ENCODE measurements at regions of chr10 and their contacts with region 1.

Region 1: DNA sequence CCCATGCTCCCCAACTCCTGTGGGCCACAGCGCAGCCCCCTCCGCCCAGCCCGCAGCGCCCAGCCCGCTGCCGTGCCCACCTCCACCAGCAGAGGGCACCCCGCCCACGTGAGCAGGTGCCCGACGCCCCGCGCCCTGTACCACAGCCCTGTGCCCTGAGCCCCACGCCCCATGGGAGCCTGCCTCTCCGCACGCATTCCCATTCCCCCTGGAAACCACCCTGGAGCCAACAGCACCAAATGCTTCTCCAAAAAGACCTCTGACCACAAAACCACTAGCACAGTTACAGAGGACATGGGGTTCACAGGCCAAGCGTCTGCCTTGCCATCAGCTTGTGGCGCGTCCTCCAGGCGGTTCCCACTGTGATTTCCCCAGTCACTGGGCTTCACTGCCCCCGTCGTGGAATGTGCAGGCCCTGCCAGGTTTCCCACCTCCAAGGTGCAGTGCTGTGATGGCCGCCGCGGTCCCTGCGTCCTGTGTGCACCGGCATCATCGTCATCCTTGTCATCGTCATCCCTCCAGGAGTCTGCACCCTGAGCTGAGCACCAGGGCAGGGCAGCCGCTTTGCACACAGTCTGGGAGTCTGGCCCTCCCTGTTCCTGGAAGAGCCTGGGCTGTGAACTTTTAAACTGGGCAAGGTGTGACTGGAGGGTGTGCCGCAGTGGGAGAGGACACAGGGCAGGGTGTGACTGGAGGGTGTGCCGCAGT is 61.7 kb downstream of the PWWP2B start:
- DNase-seq: peak; percentile 82
- ATAC-seq: peak; percentile 88
- H3K4me3 Mint-ChIP-seq: no peak overlapping the region
- H3K27ac Mint-ChIP-seq: no peak overlapping the region
- H3K4me1 Mint-ChIP-seq: no peaks in the 10 kb centered on the region
- H3K27me3 Mint-ChIP-seq: peaks cover 2% of the 10 kb centered on the region; the same call in 1 of the 2 replicates
- CTCF ChIP-seq: peak; percentile 88

Region 2: DNA sequence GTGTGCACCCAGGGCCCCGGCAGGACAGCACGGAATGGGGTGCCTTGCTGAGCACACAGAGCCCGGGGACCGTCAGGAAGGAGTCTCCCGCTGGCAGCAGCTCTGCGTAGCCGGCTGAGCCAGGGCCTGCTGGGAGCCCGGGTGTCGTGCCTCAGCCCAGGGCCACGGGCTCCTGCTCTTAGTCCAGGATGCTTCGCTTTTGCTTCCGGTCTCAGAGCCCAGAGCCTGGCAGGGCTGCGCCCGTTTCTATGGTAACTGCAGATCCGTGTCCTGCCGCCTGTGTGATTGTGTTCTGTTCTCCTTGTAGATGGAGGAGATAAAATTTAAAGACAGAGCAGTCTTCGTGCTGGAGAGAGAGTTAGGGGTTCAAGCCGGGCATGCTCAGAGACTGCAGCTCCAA is 325.7 kb before region 1 on chr10:
- CTCF ChIA-PET with region 1: no interaction called
- POLR2A ChIA-PET with region 1: no interaction called
- DNase-seq: no peak
- ATAC-seq: no peak
- H3K4me3 Mint-ChIP-seq: no peak overlapping the region
- H3K27ac Mint-ChIP-seq: no peak overlapping the region
- H3K4me1 Mint-ChIP-seq: peaks cover 5% of the 10 kb centered on the region; the same call in 1 of the 2 replicates
- H3K27me3 Mint-ChIP-seq: no peaks in the 10 kb centered on the region
- CTCF ChIP-seq: no peak

Region 3: DNA sequence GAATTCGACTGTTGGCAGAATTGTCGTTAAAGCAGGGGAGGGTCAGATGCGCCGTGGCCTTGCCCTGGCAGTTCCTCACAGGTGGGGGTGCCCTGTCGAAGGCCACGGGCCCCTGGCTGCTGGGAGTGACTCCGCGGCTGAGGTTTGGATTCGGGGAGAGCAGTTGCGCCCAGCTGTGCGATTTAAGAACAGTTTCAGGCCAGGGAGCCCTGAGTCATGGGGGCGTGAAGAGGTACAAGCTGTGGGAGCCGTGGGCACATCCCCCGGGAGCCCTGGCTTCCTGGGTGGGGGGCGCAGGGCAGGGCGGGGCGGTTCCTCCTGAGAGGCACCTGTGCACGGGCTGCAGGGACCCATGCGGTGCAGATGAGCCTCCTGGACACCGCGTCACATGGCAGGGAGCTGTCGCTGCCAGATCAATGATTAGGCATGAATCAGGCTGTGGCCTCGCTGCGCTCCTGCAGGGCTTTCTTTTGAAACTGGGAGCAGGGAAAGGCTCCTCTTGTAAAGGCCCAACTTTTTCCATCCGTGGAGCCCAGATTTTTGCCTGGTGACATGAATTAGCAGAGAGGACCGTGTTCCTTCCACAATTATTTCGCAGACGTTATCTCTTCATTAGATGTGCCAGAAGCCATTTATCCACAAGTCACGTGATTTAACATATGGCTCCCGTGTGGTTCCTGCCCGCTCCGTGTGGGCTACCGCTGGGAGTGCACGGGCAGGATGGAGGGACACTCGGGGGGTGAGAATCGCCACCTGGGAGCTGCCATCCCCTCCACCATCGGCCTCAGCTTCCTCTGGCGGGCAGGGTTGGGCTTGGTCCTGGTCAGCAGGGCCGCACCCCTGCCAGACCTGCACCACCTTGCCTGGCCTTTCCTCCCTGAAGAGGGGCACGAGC is 60.8 kb before region 1 on chr10:
- CTCF ChIA-PET with region 1: no interaction called
- POLR2A ChIA-PET with region 1: no interaction called
- DNase-seq: no peak
- ATAC-seq: no peak
- H3K4me3 Mint-ChIP-seq: peak overlapping the region; percentile 74
- H3K27ac Mint-ChIP-seq: peak overlapping the region; percentile 76
- H3K4me1 Mint-ChIP-seq: peaks cover 17% of the 10 kb centered on the region
- H3K27me3 Mint-ChIP-seq: peaks cover 4% of the 10 kb centered on the region; the same call in 1 of the 2 replicates
- CTCF ChIP-seq: no peak

Region 4: DNA sequence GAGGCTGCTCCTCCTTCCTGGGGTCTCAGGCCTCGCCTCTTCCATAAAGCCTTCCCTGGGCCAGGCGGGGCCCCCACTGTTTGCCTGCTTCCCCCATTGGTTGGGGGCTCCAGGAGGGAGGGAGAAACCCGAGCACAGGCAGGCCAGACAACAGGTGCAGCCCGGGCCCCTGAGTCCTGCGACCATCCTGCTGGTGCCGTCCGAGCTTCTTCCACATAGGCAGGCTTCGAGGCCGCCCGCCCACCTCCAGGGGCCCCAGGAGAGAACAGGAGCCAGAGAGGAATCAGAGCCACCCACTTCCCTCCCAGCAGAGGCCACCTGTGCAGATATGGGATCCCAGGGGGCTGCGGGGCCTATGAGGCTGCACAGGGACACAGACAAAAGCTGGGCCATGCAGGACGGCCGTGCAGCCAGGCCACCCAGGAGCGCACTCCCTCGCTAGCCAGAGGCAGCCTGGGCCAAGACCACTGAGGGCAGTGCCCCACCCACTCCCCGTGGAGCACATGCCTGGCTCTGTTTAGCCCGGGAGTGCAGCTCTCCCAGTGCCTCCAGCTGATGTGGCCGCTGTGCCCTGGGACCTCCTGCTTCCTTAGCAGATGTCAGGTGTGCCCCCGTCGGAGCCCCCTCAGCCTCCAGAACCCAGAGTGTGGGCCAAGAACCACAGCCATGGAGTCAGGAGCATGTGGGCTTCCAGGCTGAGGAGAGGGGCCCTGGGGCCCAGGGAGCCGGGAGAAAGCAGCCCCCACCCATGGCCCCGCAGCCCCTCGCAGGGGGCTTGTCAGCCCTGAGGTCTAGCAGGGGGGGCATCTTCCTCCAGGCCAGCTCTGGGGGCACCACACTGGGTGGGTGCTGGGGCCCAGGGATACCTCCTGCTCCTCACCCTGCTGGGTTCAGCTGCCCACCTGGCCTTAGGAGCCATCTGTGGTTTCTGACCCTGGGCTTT is 18.9 kb after region 1 on chr10:
- CTCF ChIA-PET with region 1: interaction called, 14 read pairs
- POLR2A ChIA-PET with region 1: interaction called, 3 read pairs
- DNase-seq: peak; percentile 49
- ATAC-seq: peak; percentile 88
- H3K4me3 Mint-ChIP-seq: no peak overlapping the region
- H3K27ac Mint-ChIP-seq: no peak overlapping the region
- H3K4me1 Mint-ChIP-seq: peaks cover 5% of the 10 kb centered on the region
- H3K27me3 Mint-ChIP-seq: no peaks in the 10 kb centered on the region
- CTCF ChIP-seq: no peak

Region 5: DNA sequence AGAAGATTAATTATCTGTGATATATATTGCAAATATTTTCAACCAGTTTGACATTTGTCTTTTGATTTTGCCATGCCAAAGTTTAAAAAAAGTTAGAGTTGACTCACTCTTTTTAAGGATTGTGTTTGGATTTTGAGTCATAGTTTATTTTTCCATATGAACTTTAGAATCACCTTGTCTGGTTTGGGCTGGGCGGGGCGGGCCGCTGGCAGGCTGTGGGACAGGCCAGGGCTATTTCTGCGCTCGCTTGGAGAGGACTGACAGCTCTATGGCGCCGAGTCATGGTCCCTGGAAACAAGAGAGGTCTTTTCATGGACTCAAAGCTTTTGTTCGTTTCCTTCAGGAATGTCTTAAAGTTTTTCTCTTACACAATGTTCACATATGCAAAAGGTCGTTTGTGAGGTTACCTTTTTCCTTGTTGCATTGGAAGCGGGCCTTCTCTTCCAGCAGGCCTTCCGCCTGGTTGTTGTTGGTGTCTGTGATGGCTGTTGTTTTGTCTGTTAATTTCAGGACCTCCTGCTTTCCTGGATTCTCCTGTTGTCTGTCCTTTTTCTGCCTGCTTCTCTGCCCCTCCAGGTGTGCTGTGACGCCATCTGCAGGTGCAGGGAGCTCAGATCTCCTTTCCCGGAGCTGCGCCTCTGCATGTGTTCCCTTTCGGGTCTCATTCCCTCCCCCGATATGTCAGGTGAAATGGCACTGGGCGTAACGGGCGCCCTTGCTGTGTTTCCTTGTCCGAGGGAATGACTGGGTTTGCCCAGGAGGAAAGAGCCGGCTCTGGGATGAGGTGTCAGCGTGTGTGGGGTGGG is 132.6 kb after region 1 on chr10:
- CTCF ChIA-PET with region 1: interaction called, 17 read pairs
- POLR2A ChIA-PET with region 1: no interaction called
- DNase-seq: peak; percentile 64
- ATAC-seq: peak; percentile 89
- H3K4me3 Mint-ChIP-seq: no peak overlapping the region
- H3K27ac Mint-ChIP-seq: peak overlapping the region; percentile 71
- H3K4me1 Mint-ChIP-seq: peaks cover 13% of the 10 kb centered on the region
- H3K27me3 Mint-ChIP-seq: peaks cover 6% of the 10 kb centered on the region; the same call in 1 of the 2 replicates
- CTCF ChIP-seq: no peak

Region 6: GRCh38 chr10:132634241-132634946 is 175.6 kb after region 1 on chr10:
- CTCF ChIA-PET with region 1: interaction called, 11 read pairs
- POLR2A ChIA-PET with region 1: no interaction called
- DNase-seq: peak; percentile 32
- ATAC-seq: 0 out of 2 replicates have a peak, but pooled peaks have one; percentile 36
- H3K4me3 Mint-ChIP-seq: no peak overlapping the region
- H3K27ac Mint-ChIP-seq: no peak overlapping the region
- H3K4me1 Mint-ChIP-seq: peaks cover 7% of the 10 kb centered on the region
- H3K27me3 Mint-ChIP-seq: peaks cover 3% of the 10 kb centered on the region; the same call in 1 of the 2 replicates
- CTCF ChIP-seq: no peak